ENCODE measurements at regions of chr20 and their contacts with region 1.

Region 1: DNA sequence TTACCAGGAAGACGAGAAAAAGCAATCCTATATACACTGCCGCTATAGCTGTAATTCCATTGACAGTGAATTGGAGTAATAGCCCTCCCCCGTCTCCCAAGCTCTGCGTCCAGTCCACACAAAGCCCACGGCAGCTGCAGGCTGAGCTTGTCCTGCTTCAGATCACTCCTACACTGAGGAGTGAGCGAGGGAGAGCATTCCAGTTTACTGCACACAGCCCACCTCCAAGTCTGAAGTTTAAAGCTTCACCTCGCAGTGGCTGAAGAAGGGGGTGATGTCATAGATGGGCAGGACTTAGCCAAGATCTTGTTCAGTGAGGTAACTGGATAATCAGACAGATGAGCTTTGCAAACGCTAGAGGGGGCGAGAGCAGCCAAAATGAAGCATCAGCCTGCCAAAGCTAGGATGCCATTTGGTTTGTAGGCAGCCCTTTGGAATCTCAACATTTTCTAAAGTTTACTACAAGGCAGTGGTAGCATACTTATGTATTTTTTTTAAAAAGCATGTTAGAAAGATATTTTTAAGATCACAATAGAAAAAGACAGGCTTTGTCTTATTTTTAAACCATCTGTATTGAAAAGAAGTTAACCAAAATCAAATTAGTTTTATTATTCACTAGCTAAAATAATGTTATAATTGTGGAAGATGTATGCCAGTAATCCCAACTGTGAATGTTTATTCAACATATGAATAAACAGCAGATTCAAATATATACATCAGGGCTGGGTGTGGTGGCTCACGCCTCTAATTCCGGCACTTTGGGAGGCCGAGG is at the start of gene FLRT3:
- DNase-seq: peak; percentile 49 to 70
- ATAC-seq: peak; percentile 84 to 93 (median 92)
- H3K4me3 ChIP-seq: peak within 1 kb of the TSS; percentile 64
- H3K27ac ChIP-seq: peak within 1 kb of the TSS; percentile 33
- H3K4me1 ChIP-seq: no peaks in the 10 kb centered on the region
- H3K27me3 ChIP-seq: no peaks in the 10 kb centered on the region
- CTCF ChIP-seq: peak; percentile 56
- total RNA-seq, gene FLRT3: 0.91 to 3.1 (median 2.1) TPM

Region 2: DNA sequence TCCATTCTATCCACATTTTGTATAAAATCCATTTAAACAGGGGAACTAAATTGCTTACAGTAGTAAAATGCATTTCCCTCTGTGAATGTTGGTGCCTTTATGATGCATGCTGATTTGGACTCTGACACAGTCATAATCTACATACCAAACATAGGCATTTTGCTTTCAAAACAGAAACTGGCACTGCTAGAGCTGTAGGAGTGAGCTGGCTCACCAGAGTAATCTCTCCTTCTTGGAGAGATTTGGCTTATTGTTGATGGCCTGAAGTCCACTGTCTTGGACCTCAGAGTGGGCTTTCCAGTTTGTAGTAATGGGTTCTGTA is 363.0 kb after region 1 on chr20:
- intact Hi-C with region 1: loop called in 1 of 2 experiments (anchors 10 kb)
- DNase-seq: no peak
- ATAC-seq: peak in 1 of 4 donors; percentile 51
- H3K4me3 ChIP-seq: no peak overlapping the region
- H3K27ac ChIP-seq: no peak overlapping the region
- H3K4me1 ChIP-seq: no peaks in the 10 kb centered on the region
- H3K27me3 ChIP-seq: no peaks in the 10 kb centered on the region
- CTCF ChIP-seq: no peak

Region 3: DNA sequence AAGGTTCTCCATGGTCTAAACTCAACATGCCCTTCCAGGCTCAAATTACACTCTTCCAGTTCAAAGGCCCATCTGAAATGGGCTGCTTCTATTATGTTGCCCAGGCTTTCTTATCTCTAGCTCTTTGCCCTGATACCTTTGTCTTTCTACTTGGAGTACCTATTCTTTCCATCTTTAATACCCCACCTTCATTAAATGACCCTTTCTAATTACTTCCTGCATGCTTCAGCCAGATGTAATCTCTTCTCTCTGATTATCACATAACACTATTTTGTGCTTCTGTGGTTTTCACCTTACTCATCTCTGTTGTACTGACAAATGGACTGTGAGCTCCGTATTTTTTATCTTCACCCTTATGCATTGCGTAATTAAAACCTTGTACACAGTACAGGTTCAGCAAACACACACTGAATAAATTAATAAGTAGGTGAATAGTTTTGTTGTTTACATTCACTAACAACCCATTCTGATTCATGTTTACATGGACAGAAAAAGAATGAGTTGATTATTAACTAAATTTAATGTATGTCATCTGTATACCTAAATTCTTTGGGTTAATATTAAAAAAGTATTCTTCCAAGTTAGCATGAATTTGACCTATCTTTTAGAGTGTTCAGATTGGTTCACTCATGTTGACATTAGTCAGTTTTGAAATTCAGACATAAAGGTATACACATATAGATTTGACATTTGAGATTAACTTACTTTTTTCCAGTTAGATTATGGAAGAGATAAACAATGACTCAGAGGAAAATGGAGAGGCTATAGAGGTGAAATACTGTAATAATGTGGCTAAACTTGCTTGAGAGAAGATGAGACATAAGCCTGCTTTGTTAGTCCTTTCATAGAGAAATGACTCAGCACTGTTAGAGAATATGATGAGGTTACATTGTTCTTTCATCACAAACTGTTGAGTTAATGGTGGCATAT is 541.4 kb after region 1 on chr20:
- intact Hi-C with region 1: loop called in 1 of 2 experiments (anchors 10 kb)
- DNase-seq: no peak
- ATAC-seq: peak in 3 of 4 donors; percentile 60 to 73 (median 72)
- H3K4me3 ChIP-seq: no peak overlapping the region
- H3K27ac ChIP-seq: no peak overlapping the region
- H3K4me1 ChIP-seq: no peaks in the 10 kb centered on the region
- H3K27me3 ChIP-seq: no peaks in the 10 kb centered on the region
- CTCF ChIP-seq: no peak

Measured in psoas muscle (tissue), 8 donors.